HepG2 (cell line): ENCODE measurements at regions of chr2 and their contacts with region 1.

Region 1: DNA sequence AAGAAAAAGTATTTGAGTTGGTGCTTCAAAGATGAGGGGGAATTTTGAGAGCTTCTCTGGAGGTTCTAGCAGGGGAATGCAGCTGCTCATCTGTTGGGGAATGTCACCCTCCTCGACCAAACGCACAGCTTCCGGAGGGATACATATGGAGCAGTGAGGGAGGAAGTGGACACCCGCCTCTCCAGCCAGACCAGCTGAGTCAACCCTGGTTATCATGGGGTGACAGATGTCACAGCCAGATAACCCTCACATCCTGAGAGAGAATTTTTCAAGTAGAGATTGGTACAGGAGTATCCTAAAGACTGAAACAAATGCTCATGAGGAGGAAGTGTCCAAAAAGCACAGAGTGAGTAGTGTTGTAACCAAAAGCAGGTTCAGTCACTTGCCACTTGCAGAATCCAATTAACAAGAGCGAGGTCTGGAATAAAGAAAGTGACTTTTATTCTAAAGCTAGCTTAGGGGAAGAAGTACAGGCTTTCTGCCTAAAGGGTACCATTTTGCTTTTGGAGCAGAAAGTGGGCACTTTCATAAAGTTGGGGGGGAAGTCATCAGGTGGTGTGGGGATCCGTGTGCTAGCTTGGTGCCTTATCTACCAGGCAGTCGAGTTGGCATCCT is 395.2 kb downstream of the RAD51AP2 start:
- DNase-seq: no peak
- ATAC-seq: no peak
- H3K4me3 ChIP-seq: no peak overlapping the region
- H3K27ac ChIP-seq: no peak overlapping the region
- H3K4me1 ChIP-seq: no peaks in the 10 kb centered on the region
- H3K27me3 ChIP-seq: no peaks in the 10 kb centered on the region
- CTCF ChIP-seq: no peak
- EP300 ChIP-seq: no peak
- POLR2A ChIP-seq: no peak
- RAD21 ChIP-seq: no peak

Region 2: GRCh38 chr2:17136877-17137276 is 13.9 kb after region 1 on chr2:
- CTCF ChIA-PET with region 1: no interaction called
- POLR2A ChIA-PET with region 1: no interaction called
- in situ Hi-C with region 1: no loop called
- intact Hi-C with region 1: no loop called
- DNase-seq: no peak
- ATAC-seq: no peak
- H3K4me3 ChIP-seq: no peak overlapping the region
- H3K27ac ChIP-seq: no peak overlapping the region
- H3K4me1 ChIP-seq: no peaks in the 10 kb centered on the region
- H3K27me3 ChIP-seq: no peaks in the 10 kb centered on the region
- CTCF ChIP-seq: no peak
- EP300 ChIP-seq: no peak
- POLR2A ChIP-seq: no peak
- RAD21 ChIP-seq: no peak

Region 3: DNA sequence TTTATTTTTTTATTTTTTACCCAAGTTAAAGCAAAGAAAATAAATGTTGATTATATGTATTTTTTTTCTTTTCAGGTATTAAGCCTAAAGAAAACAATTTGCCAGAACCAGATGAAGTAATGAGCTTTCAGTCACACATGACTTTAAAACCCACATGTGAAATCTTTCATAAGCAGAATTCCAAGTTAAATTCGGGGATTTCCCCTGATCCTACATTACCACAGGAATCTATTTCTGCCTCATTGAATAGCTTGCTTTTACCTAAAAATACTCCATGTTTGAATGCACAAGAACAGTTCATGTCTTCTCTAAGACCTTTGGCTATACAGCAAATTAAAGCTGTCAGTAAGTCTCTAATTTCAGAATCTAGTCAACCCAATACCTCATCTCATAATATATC is 657.6 kb after region 1 on chr2:
- CTCF ChIA-PET with region 1: no interaction called
- POLR2A ChIA-PET with region 1: no interaction called
- in situ Hi-C with region 1: no loop called
- intact Hi-C with region 1: loop called (anchors 10 kb)
- DNase-seq: no peak
- ATAC-seq: no peak
- H3K4me3 ChIP-seq: no peak overlapping the region
- H3K27ac ChIP-seq: no peak overlapping the region
- H3K4me1 ChIP-seq: peaks cover 14% of the 10 kb centered on the region
- H3K27me3 ChIP-seq: no peaks in the 10 kb centered on the region
- CTCF ChIP-seq: no peak
- EP300 ChIP-seq: no peak
- POLR2A ChIP-seq: no peak
- RAD21 ChIP-seq: no peak